ENCODE measurements at regions of chr12 and their contacts with region 1.

Region 1: DNA sequence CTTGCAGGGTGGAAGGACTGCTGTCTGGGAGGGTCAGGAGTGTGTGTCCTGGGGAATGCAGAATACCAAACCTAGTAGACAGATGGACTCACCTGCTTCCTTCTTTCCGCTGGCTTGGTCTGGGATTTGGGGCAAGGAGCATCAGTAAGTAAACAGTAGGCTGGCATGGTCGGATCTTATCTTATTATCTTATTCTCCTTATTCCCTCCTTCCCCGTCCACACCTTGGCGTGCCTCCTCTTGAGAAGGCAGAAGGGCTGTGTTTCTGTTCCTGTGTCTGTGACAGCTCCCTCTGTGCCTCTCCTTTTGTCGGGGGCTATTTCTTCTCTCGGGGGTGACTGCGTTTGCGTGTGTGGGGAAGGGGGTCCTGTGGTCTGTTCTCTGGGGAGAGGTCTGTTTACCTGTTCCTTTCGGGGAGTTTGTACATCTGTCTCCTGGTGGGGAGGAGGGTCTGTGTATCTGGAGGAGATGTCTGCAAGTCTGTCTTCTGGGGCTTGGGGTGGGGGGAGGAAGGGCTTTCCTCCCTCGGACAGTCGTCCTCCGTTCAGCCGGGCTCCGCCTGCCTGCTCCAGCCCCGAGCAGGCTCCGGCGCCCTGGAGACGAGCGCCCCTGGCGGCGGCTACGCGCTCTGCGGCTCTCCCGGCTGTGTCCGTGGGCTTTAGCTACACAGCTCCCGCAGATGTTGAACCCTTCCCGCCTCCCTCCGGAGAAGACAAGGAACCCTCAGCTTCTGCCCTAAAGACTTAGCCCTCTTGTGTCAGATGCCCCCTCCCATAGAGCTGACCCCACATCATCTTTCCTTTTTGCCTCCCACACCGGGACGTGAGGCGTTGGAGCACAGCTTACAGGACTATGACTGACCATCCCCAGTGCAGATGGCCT is 4.3 kb downstream of the KRT86 start:
- DNase-seq: peak; percentile 64
- H3K4me3 ChIP-seq: no peak overlapping the region
- H3K27ac ChIP-seq: no peak overlapping the region
- H3K4me1 ChIP-seq: peaks cover 3% of the 10 kb centered on the region
- H3K27me3 ChIP-seq: peaks cover 12% of the 10 kb centered on the region in 2 experiments
- CTCF ChIP-seq: peak; percentile 98 to 100
- POLR2A ChIP-seq: no peak

Region 2: GRCh38 chr12:52156736-52157565 is 121.8 kb before region 1 on chr12:
- CTCF ChIA-PET with region 1: interaction called, 13 read pairs
- POLR2A ChIA-PET with region 1: no interaction called
- dilution Hi-C with region 1: no loop called
- intact Hi-C with region 1: loop called (anchors 2 kb)
- DNase-seq: peak; percentile 58
- H3K4me3 ChIP-seq: no peak overlapping the region
- H3K27ac ChIP-seq: no peak overlapping the region
- H3K4me1 ChIP-seq: peaks cover 2% of the 10 kb centered on the region
- H3K27me3 ChIP-seq: no peaks in the 10 kb centered on the region
- CTCF ChIP-seq: peak; percentile 93 to 94
- POLR2A ChIP-seq: no peak

Region 3: DNA sequence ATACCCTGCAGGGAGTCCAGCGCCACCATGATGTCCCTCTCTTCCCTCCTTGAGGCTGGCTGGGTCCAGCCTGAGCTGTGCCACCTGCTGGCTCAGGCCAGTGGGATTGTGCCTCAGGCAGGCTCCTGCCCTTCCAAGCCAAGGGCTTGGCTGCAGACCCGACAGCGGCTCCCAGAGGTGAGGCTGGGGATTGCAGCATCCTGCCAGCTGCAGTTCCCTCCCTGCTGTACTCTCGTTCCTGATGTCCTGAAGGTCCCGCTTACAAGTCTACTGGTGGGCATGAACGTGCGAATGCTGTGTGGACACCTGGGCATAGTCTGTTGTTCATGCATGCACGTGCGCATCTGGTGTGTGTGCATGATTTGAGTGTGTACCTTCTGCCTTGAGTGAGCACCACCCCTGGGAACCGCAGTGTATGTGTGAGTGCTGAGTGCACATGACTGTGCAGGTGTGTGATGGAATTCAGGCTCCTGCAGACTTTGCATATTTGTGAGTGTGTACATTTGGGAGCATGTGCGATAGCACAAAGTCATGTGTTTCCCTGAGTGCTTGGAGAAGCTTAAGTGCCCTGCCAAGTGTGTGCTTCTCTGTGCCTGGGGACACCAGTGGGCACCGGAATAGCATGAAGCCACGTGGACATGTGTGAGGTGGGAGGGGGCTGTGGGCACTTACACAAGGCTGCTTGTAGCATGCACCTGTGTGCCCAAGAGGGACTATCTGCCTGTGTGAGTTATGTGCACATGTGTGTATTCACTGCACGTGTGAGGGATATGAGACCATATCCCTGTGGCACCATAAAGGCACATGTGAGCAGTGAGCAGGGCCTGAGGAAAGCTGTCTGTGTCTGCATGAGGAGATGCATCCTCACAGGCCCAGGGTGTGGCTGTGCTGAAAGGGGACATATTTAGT is 65.0 kb before region 1 on chr12:
- CTCF ChIA-PET with region 1: interaction called, 20 read pairs
- POLR2A ChIA-PET with region 1: no interaction called
- dilution Hi-C with region 1: no loop called
- intact Hi-C with region 1: loop called (anchors 1 kb)
- DNase-seq: peak; percentile 90
- H3K4me3 ChIP-seq: no peak overlapping the region
- H3K27ac ChIP-seq: no peak overlapping the region
- H3K4me1 ChIP-seq: peaks cover 33% of the 10 kb centered on the region
- H3K27me3 ChIP-seq: no peaks in the 10 kb centered on the region
- CTCF ChIP-seq: peak; percentile 100
- POLR2A ChIP-seq: no peak

Region 4: DNA sequence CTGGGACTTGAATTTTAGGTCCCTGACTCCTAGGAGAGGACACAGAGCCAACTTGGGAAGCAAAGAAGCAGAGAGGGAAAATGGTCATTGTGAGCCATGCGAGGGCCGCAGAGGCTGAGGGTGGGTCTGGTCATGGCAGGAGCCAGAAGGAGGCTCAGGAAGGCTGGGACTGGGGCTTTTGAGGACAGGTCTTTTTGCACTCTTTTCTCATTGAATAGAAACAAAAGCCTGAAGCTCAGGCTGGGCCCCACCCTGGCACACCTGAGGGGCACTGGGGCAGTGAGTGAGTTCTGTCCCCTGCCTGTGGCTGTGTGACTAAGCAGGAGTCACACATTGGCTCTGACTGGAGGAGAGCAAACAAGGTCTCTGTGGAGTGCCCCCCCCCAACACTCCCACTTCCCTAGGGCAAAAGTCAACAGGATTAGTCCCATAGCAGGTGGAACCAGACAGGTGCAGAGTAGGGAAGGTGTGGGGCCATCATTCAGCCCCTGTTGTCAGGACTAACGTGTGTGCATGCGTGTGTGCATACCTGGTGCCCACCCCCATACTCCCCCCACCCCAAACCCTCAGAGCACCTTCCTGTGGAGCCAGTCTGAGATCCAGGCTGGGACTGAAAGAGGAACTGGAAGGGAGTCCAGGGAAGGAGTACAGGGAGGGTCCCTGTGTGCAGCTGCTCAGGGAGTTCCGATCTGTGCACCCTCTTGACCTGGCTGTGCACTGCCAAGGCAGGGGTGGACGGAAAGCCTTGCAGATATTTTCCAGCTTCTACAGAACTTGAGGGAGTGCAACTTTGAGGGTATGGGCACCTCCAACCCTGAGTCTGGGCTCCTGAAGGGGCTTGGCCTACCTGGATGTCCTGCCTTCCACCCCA is 42.7 kb before region 1 on chr12:
- CTCF ChIA-PET with region 1: interaction called, 10 read pairs
- POLR2A ChIA-PET with region 1: no interaction called
- dilution Hi-C with region 1: no loop called
- intact Hi-C with region 1: no loop called
- DNase-seq: no peak
- H3K4me3 ChIP-seq: no peak overlapping the region
- H3K27ac ChIP-seq: no peak overlapping the region
- H3K4me1 ChIP-seq: peaks cover 28% of the 10 kb centered on the region
- H3K27me3 ChIP-seq: no peaks in the 10 kb centered on the region
- CTCF ChIP-seq: no peak
- POLR2A ChIP-seq: peak; percentile 6

Region 5: DNA sequence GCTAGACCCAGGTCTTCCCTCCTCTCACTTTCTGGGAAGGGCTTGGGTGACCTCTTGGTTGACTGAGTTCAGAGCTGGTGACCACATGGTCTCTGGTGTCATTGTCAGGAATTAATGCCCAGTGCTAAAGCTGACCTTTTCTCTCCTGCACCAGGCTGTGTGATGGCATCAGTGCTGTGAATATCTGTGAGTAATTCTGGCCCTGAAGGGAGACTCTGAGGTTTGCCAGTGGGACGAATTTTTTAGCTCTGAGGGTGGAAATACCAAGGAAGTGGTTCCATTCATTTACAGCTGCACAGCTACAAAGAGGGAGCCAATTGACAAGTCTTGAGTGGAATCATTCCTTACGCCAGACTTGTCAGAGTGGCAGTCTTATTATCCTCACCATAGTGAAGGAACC is 10.6 kb before region 1 on chr12:
- CTCF ChIA-PET with region 1: interaction called, 28 read pairs
- POLR2A ChIA-PET with region 1: no interaction called
- dilution Hi-C with region 1: no loop called
- intact Hi-C with region 1: no loop called
- DNase-seq: no peak
- H3K4me3 ChIP-seq: no peak overlapping the region
- H3K27ac ChIP-seq: no peak overlapping the region
- H3K4me1 ChIP-seq: no peaks in the 10 kb centered on the region
- H3K27me3 ChIP-seq: peaks cover 12 to 24% of the 10 kb centered on the region in 2 experiments
- CTCF ChIP-seq: no peak
- POLR2A ChIP-seq: no peak

Region 6: DNA sequence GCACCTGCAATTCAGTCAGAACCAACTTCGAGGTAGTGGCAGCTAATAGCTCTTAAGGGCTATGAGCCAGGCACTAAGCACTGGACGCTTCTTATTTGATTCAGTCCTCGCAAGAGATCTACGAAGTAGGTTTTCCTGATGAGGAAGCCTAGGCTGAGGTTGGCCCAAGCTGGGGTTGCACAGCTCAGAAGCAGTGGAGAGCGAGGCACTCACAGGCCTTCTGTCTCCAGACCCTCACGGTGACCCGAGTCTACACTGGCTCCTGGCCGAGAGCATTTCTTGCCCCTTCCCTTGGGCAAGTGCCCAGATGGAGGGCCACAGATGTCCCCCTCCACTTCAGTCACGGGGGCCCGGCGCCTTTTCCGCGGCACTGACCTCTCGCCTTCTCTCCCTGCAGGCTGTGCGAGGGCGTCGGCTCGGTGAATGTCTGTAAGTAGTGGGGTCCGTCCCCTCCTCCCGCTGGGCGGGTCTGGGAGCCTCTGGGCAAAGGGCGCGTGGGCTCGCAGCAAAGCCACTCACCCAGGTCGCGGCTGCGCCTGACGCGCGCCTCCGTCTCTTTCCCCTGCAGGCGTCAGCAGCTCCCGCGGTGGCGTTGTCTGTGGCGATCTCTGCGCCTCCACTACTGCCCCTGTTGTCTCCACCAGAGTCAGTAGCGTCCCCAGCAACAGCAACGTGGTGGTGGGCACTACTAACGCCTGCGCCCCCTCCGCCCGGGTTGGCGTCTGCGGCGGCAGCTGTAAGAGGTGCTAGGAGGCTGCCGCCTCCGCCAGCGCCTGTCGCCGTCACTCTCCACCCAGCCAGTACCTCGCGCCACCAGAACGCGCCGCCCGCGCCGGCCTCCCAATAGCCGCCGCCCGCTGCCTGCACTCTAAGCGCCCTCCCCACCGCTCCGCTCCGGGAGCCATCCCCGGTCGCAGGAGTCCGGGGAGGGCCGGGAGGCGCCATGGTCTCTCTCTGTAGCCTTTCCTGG is 29.3 kb after region 1 on chr12:
- CTCF ChIA-PET with region 1: interaction called, 17 read pairs
- POLR2A ChIA-PET with region 1: no interaction called
- dilution Hi-C with region 1: no loop called
- intact Hi-C with region 1: no loop called
- DNase-seq: peak; percentile 13
- H3K4me3 ChIP-seq: no peak overlapping the region
- H3K27ac ChIP-seq: no peak overlapping the region
- H3K4me1 ChIP-seq: no peaks in the 10 kb centered on the region
- H3K27me3 ChIP-seq: peaks cover 59 to 62% of the 10 kb centered on the region in 2 experiments
- CTCF ChIP-seq: peak in 1 of 2 donors; percentile 12
- POLR2A ChIP-seq: no peak

Region 7: DNA sequence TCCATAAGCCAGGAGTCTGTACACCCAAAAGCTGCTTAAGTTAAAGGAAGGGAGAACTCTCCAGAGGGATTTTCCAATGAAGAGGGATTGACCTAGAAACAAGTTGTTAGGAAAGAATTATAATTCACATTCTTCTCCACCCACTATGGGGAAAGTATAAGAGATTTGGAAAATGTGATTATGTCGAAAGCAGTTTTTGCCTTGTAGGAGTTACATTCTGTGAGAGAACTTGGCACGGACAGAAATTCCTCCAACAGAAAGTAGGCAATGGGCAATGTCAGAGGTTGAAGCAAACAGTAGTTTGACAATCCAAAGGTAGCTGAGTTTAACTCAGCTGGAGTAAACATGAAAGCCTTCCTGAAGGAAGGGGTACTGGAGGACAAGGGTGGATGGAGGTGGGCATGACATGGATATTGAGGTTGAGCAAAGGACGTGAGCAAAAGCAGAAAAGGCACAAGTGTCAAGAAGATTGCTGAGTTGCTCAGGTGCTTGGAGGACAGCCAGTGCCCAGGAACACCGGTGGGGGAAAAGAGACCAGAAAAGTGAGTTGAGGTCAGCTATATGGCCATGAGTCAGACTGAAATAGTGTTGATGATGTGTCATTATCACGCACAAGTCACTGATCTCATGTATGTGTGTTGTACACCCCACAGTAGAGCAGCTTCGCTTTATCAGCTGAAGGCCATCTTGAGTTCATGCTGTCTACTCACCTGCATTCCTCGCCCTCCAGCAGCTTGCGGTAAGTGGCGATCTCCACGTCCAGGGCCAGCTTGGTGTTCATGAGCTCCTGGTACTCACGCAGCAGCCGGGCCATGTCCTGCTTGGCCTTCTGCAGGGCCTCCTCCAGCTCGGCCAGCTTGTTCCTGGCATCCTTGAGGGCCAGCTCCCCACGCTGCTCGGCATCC is 237.4 kb after region 1 on chr12:
- CTCF ChIA-PET with region 1: no interaction called
- POLR2A ChIA-PET with region 1: no interaction called
- dilution Hi-C with region 1: no loop called
- intact Hi-C with region 1: no loop called
- DNase-seq: no peak
- H3K4me3 ChIP-seq: no peak overlapping the region
- H3K27ac ChIP-seq: no peak overlapping the region
- H3K4me1 ChIP-seq: no peaks in the 10 kb centered on the region
- H3K27me3 ChIP-seq: no peaks in the 10 kb centered on the region
- CTCF ChIP-seq: no peak
- POLR2A ChIP-seq: no peak